GM10248 (cell line): ENCODE measurements at regions of chr12 and their contacts with region 1.

Region 1: DNA sequence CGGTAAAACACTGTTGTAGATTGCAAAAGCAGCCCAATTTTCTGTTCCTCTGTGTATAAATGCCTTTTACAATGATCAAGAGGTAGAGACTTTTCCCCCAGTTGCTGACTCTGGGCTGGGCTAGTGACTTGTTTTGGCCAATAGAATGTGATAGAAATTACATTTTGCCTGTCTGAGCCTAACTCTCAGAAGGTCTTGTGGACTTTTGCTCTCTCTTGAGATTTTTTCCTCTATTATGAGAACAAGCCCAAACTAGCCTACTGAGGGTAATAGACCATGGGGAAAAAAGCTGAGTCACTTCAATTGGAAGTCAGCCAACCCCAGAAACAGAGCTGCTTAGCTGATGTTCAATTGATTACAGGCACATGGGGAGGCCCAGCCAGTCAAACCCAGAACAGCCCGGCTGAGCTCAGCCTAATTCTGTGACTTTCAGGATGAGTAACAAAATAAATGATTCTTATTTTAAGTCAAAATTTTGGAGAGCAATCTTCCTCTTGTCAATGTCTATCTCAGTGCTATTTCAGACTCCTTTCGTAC is 61.4 kb downstream of the MYF5 start:
- DNase-seq: peak; percentile 59
- CTCF ChIP-seq: no peak

Region 2: DNA sequence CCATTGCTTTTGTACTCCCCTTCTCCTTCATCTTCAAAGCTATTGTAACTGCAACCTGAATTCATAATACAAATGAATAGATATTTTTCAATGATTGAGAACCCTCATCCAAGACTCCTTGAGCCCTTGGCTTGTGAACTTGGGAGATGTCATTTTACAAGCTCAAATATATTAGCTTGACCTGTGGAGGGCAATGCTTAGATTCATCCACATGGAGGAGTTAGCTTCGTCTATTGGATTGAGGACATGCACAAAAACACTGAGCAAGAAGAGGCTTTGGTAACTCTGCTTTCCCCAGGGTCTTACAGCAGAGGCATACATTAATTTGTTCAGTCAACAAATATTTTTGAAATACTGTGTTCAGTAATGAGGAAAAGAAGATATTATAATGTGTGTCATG is 577.7 kb before region 1 on chr12:
- CTCF ChIA-PET with region 1: no interaction called
- POLR2A ChIA-PET with region 1: no interaction called
- DNase-seq: no peak
- CTCF ChIP-seq: no peak

Region 3: DNA sequence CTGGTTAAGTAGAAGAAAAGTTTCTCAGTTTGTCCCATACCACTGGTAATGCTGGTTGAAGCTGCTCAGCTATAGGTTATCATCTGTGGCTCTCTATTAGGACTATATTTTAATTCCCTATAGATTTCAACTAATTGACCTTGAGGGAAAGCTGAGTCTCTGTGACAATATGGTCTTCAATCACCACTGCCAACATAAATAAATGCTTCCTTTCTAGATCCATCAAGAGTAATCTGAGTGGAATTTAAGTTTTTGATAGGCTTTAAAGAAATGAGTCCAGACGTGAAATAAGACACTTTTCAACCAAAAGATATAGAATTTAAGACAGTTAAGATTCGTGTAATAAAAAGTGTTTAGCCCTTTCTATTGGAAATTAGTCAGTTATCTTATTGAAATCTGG is 134.1 kb before region 1 on chr12:
- CTCF ChIA-PET with region 1: no interaction called
- POLR2A ChIA-PET with region 1: no interaction called
- DNase-seq: no peak
- CTCF ChIP-seq: no peak

Region 4: DNA sequence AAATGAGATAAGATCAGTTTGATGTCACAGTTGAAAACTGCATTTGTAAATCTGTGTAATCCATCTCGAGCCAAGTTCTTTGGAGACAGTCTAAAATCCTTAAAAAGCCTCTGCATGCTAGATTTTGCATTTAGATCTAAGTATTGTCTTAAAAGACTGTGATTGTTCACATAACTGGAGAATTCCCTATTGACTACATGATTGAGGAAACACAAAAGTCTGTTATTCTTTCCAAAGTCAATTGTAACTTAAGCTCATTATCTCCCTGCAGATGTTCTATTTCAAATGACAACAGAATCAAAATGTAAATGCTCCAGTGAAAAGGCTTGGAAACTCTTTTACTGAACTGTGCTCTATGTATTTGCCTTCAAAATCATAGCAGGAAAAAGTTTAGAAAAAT is 16.5 kb after region 1 on chr12:
- CTCF ChIA-PET with region 1: interaction called, 31 read pairs
- POLR2A ChIA-PET with region 1: interaction called, 3 read pairs
- DNase-seq: no peak
- CTCF ChIP-seq: no peak